Caco-2 (cell line): ENCODE measurements at regions of chr7 and their contacts with region 1.

Region 1: GRCh38 chr7:51224811-51225612 is 91.6 kb downstream of the COBL start:
- DNase-seq: peak in 1 of 2 experiments; percentile 60
- H3K4me3 ChIP-seq: no peak overlapping the region
- H3K4me3 Mint-ChIP-seq: no peak overlapping the region
- H3K27ac Mint-ChIP-seq: no peak overlapping the region
- H3K4me1 ChIP-seq: peaks cover 16% of the 10 kb centered on the region
- H3K4me1 Mint-ChIP-seq: peaks cover 23% of the 10 kb centered on the region
- H3K27me3 ChIP-seq: no peaks in the 10 kb centered on the region
- H3K27me3 Mint-ChIP-seq: no peaks in the 10 kb centered on the region
- CTCF ChIP-seq: peak in 1 of 2 experiments; percentile 63

Region 2: DNA sequence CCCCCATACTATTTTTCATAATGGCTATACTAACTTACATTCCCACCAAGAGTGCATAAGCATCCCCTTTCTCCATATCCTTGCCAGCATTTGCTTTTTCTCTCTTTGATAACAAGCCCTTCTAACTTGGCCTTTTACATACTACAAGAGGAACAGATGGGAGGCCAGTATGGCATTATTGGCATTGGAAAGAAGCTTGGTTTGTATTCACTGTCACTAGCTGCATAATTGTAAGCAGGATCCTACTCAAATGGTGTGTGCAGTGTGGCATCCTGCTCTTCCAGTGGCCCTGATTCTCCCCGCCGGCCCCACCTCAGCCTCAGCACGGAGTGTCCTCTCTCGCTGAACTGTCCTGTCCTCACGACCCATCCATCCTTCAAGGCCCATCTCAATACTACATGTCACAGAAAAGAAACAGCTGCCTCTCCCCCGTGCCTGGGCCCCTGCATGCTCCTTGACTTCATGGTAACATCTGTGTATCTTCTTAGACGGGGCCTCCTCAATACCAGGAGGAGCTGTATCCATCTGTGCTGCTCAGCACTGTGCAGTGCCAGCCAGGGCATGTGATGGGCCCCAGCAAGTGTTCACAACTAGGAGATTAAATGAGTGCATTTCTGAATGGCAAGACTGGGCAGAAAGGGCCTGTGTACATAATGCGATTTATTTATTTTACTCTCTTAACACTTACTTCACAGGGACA is 113.6 kb before region 1 on chr7:
- CTCF ChIA-PET with region 1: no interaction called
- POLR2A ChIA-PET with region 1: no interaction called
- intact Hi-C with region 1: no loop called
- DNase-seq: no peak
- H3K4me3 ChIP-seq: no peak overlapping the region
- H3K4me3 Mint-ChIP-seq: no peak overlapping the region
- H3K27ac Mint-ChIP-seq: no peak overlapping the region
- H3K4me1 ChIP-seq: no peaks in the 10 kb centered on the region
- H3K4me1 Mint-ChIP-seq: no peaks in the 10 kb centered on the region
- H3K27me3 ChIP-seq: no peaks in the 10 kb centered on the region
- H3K27me3 Mint-ChIP-seq: no peaks in the 10 kb centered on the region
- CTCF ChIP-seq: no peak

Region 3: GRCh38 chr7:51187941-51188340 is 37.1 kb before region 1 on chr7:
- CTCF ChIA-PET with region 1: no interaction called
- POLR2A ChIA-PET with region 1: interaction called, 3 read pairs
- intact Hi-C with region 1: loop called (anchors 2 kb)
- DNase-seq: peak; percentile 53 to 56
- H3K4me3 ChIP-seq: no peak overlapping the region
- H3K4me3 Mint-ChIP-seq: no peak overlapping the region
- H3K27ac Mint-ChIP-seq: no peak overlapping the region
- H3K4me1 ChIP-seq: no peaks in the 10 kb centered on the region
- H3K4me1 Mint-ChIP-seq: no peaks in the 10 kb centered on the region
- H3K27me3 ChIP-seq: no peaks in the 10 kb centered on the region
- H3K27me3 Mint-ChIP-seq: no peaks in the 10 kb centered on the region
- CTCF ChIP-seq: peak in 1 of 2 experiments; percentile 48